Mammary epithelial cell (primary cell): ENCODE measurements at regions of chr3 and their contacts with region 1.

Region 1: DNA sequence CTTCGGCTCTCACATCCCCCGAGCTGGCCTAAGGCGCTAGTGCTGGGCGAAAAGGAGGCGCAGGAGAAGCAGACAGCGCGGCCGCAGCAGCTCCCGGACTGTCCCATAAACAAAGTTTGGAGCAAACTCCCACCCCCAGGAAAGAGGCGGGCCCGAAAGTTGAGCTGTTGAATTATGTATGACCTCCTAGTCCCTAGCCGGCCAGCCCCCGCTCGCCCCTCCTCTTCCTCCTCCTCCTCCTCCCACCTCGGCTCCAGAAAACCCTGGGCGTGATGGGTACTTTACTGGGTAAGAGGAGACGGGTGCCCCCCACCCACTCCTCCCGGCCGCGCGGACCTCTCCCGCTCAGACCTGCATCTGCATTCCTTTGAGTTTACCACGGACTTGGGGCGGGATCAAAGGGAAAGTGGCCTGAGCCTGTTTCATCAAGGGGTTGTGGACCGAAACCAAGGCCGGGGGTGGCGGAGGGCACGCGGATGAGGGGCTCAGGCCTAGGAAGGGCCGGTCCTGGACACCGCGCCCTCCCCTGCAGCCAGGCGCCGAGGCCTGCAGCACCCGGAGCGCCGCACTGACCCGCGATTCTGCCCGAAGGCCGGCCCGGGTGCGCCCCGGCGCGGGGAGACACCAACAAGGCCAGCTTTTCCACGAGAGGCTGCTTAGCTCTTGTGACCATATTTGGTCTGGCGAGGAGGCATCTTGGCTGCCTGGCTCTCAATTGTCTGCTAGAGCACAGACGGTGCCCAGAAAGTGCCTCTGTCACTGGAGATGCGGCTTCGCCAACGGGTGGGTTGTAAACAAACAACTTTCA is at the start of gene WWTR1:
- DNase-seq: peak; percentile 96
- H3K4me3 ChIP-seq: peak within 1 kb of the TSS; percentile 60 to 84 (median 83)
- H3K27ac ChIP-seq: peak within 1 kb of the TSS; percentile 89
- H3K4me1 ChIP-seq: peaks cover 34% of the 10 kb centered on the region
- H3K27me3 ChIP-seq: no peaks in the 10 kb centered on the region
- CTCF ChIP-seq: peak in 1 of 2 donors; percentile 30
- total RNA-seq, gene WWTR1: 56.1 to 58.0 TPM

Region 2: DNA sequence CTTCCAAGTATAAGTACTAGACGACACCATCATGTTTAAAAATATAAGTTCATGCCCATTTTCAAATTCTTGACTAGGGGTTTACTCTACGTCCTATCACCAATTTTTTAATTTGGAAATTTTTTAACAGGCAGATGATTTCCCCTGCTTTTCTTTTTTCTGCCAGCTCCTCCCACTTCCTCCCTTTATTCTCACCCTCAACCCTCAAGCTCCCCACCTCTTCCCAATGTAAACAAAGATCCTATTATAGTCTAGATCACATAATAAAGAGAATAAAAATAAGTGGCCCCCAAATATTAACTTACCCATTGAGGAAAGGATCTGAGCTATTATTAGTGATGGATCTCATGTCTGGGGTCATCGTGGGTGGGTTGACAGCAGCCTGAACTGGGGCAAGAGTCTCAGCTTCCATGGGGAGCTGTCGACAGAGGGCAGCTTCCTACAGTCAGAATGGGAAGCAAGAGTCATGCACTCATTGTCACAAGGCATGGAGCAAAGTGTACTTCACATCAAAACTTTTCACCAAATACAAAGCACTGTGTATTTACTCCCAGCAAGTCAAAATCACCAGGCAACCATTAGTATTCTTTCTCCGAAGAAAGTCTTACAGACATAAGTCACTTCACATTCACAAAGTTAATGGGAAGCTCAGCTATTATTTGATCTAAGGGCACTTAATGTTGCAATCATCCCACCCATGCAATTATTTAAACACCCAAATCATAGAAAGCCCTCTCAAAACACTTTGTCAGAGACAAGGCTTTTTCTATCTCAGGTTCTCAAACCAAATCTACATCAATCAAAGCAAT is 130.4 kb before region 1 on chr3:
- CTCF ChIA-PET with region 1: no interaction called
- dilution Hi-C with region 1: no loop called
- in situ Hi-C with region 1: no loop called
- intact Hi-C with region 1: loop called (anchors 1 kb)
- DNase-seq: no peak
- H3K4me3 ChIP-seq: no peak overlapping the region
- H3K27ac ChIP-seq: no peak overlapping the region
- H3K4me1 ChIP-seq: peaks cover 14% of the 10 kb centered on the region
- H3K27me3 ChIP-seq: no peaks in the 10 kb centered on the region
- CTCF ChIP-seq: no peak

Region 3: GRCh38 chr3:149575961-149576564 is 82.1 kb before region 1 on chr3:
- CTCF ChIA-PET with region 1: interaction called, 3 read pairs
- dilution Hi-C with region 1: loop called (anchors 5 kb)
- in situ Hi-C with region 1: loop called (anchors 10 kb)
- intact Hi-C with region 1: loop called (anchors 1 kb)
- DNase-seq: peak; percentile 99
- H3K4me3 ChIP-seq: no peak overlapping the region
- H3K27ac ChIP-seq: peak overlapping the region; percentile 97
- H3K4me1 ChIP-seq: peaks cover 89% of the 10 kb centered on the region
- H3K27me3 ChIP-seq: no peaks in the 10 kb centered on the region
- CTCF ChIP-seq: no peak

Region 4: DNA sequence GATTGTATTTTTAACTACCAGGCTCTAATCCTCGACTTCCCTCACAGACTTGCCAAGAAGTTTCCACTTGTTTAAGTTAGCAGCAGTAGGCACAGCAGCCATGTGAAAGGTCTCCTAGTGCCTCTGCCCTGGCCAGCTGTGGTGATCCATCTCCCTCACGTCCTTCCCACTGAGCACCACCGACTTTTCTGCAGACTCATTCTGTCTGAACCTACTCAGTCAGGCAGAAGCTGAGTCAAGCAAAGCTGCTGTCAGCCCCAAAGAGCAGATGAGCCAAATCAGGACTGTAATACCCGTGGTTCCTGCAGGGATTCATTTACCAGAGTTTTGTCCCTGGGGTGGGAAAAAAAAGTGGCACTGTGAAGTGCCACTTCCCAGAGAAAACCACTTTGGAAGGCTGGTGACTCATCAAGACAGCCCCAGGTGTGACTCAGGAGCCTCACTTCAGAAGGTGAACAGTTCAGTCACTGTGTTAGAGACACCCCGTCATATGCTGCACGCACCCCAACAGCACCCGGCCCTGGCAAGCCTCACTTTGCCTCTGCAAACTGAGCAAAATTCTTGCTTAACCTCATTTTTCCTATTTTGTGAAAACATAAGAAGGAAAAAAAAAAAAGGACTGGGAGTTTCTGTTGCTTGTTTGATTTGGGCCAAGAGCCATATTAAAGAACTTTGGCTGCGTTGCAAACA is 76.3 kb before region 1 on chr3:
- CTCF ChIA-PET with region 1: interaction called, 3 read pairs
- dilution Hi-C with region 1: no loop called
- in situ Hi-C with region 1: loop called (anchors 10 kb)
- intact Hi-C with region 1: loop called (anchors 1 kb)
- DNase-seq: peak; percentile 98
- H3K4me3 ChIP-seq: peak overlapping the region in 1 of 3 experiments; percentile 2
- H3K27ac ChIP-seq: peak overlapping the region; percentile 98
- H3K4me1 ChIP-seq: peaks cover 87% of the 10 kb centered on the region
- H3K27me3 ChIP-seq: no peaks in the 10 kb centered on the region
- CTCF ChIP-seq: no peak

Region 5: DNA sequence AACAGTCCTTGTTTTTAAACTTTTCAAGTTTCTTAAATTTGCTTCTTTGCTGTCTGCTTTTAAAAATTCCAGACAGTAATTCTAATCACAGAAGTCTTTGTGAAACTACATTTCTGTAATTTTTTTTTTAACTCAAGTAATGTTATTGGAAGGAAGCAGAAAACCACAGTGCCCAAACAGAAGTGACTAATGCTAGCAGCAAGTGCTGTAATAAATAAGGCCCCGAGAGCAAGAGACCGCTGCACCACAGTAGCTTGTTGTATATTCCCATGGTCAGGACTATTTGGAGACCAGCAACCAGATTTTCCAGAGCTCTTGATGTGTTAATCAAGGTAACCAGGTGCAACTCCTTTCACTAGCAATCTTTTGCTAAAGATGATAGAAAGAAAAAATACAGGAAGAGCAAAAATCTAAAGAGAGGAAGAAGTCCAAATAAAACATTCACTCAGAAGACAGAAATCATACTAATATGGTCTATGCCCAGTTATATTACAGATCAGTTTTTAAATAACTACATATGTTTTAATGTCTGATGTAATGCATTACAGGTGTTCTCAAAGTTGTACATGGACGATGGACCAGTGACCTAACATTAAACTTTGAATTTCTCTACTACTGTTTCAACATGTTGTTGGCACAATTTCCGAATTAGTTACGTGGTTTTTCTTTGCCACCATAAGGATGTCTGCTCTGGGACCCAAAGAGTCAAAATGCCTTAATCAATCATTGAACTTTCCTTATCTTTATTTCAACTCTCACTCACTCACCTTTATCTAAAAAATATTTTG is 36.7 kb before region 1 on chr3:
- CTCF ChIA-PET with region 1: no interaction called
- dilution Hi-C with region 1: no loop called
- in situ Hi-C with region 1: no loop called
- intact Hi-C with region 1: loop called (anchors 2 kb)
- DNase-seq: peak; percentile 86
- H3K4me3 ChIP-seq: no peak overlapping the region
- H3K27ac ChIP-seq: peak overlapping the region; percentile 46
- H3K4me1 ChIP-seq: peaks cover 51% of the 10 kb centered on the region
- H3K27me3 ChIP-seq: no peaks in the 10 kb centered on the region
- CTCF ChIP-seq: no peak

Region 6: DNA sequence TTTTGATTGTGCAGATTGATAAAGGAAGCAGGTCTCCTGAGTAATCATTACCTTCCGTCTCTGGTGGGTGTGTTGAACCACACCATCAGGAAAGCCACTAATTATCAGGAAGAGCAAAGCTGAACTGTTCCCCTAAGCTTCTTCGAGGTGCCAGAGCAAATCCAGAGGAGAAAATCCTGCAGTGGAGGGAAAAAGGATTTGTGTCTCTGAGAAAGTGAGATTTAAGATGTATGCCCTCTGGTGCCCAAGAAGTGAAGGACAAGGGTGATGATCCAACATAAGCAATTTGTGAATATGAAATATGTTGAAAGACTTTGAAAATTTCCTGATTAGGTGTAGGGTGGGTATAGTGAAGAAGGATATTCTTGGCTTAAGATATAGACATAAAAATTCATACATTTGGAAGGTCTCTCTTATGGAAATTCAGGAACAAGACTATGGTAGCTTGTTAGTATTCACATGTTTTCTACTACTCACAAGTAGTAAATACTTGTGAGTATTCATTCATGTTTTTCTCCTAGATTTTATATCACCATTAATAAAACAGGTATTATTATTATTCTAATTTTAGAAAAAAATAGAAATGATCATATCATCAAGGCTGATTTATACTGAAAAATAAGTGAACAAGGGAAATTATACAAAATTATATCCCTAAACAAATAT is 59.4 kb after region 1 on chr3:
- CTCF ChIA-PET with region 1: no interaction called
- dilution Hi-C with region 1: loop called (anchors 5 kb)
- in situ Hi-C with region 1: no loop called
- intact Hi-C with region 1: loop called (anchors 1 kb)
- DNase-seq: peak; percentile 59
- H3K4me3 ChIP-seq: no peak overlapping the region
- H3K27ac ChIP-seq: no peak overlapping the region
- H3K4me1 ChIP-seq: peaks cover 8% of the 10 kb centered on the region
- H3K27me3 ChIP-seq: no peaks in the 10 kb centered on the region
- CTCF ChIP-seq: peak; percentile 65 to 71

Region 7: DNA sequence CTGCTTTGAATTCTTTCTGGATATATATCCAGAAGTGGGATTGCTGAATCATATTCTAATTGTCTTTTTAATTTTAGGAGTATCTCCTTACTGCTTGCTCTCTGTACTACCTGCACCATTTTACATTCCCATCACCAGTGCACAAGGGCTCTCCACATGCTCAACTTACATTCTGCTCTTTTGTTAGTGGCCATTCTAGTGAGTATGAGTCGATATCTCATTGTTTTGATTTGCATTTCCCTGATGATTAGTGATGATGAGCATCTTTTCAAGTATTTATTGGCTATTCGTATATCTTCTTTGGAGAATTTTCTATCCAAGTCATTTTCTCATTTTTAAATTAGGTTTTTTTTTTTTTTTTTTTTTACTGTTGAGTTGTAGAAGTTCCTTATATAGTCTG is 283.1 kb after region 1 on chr3:
- CTCF ChIA-PET with region 1: no interaction called
- dilution Hi-C with region 1: no loop called
- in situ Hi-C with region 1: no loop called
- intact Hi-C with region 1: no loop called
- DNase-seq: peak; percentile 30
- H3K4me3 ChIP-seq: no peak overlapping the region
- H3K27ac ChIP-seq: no peak overlapping the region
- H3K4me1 ChIP-seq: no peaks in the 10 kb centered on the region
- H3K27me3 ChIP-seq: no peaks in the 10 kb centered on the region
- CTCF ChIP-seq: no peak